Activated CD4-positive, alpha-beta memory T cell treated with anti-CD3 and anti-CD28 coated beads for 36 hours (primary cell): ENCODE measurements at regions of chr2 and their contacts with region 1.

Region 1: GRCh38 chr2:196926562-196927375 is at the start of gene PGAP1:
- DNase-seq: peak; percentile 93
- H3K4me3 Mint-ChIP-seq: peak within 1 kb of the TSS; percentile 96
- H3K27ac Mint-ChIP-seq: peak within 1 kb of the TSS; percentile 100
- H3K4me1 Mint-ChIP-seq: peaks cover 35% of the 10 kb centered on the region
- H3K27me3 Mint-ChIP-seq: peaks cover 4% of the 10 kb centered on the region
- total RNA-seq, gene PGAP1: 24.5 to 25.5 TPM

Region 2: DNA sequence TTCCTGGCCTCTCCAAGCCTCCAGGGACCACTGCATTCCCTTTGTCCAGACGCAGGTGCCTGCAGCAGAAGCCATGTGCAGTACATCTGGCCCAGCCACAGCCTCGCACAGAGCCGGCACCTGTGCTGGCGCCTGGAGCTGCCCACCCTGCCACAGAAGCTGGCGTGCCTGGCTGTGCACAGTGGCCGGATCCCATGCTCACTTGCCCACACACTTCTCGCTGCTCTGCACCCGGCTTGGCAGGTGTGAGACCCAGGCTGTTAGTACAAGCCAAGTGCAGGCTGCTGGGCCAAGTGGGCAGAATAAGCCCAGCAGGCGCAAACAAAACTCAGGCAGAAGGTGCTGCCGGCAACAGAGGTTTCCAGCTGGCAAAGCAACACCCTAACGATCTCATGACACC is 411.7 kb before region 1 on chr2:
- CTCF ChIA-PET with region 1: no interaction called
- POLR2A ChIA-PET with region 1: no interaction called
- intact Hi-C with region 1: no loop called
- DNase-seq: no peak
- H3K4me3 Mint-ChIP-seq: no peak overlapping the region
- H3K27ac Mint-ChIP-seq: no peak overlapping the region
- H3K4me1 Mint-ChIP-seq: no peaks in the 10 kb centered on the region
- H3K27me3 Mint-ChIP-seq: peaks cover 4% of the 10 kb centered on the region

Region 3: GRCh38 chr2:196914867-196915460 is 11.8 kb before region 1 on chr2:
- CTCF ChIA-PET with region 1: interaction called, 3 read pairs
- POLR2A ChIA-PET with region 1: interaction called, 14 read pairs
- intact Hi-C with region 1: loop called (anchors 1 kb)
- DNase-seq: no peak
- H3K4me3 Mint-ChIP-seq: peak overlapping the region; percentile 10
- H3K27ac Mint-ChIP-seq: peak overlapping the region; percentile 93
- H3K4me1 Mint-ChIP-seq: peaks cover 33% of the 10 kb centered on the region
- H3K27me3 Mint-ChIP-seq: no peaks in the 10 kb centered on the region

Region 4: GRCh38 chr2:196949116-196949515 is 22.3 kb after region 1 on chr2:
- CTCF ChIA-PET with region 1: no interaction called
- POLR2A ChIA-PET with region 1: no interaction called
- intact Hi-C with region 1: no loop called
- DNase-seq: no peak
- H3K4me3 Mint-ChIP-seq: no peak overlapping the region
- H3K27ac Mint-ChIP-seq: no peak overlapping the region
- H3K4me1 Mint-ChIP-seq: no peaks in the 10 kb centered on the region
- H3K27me3 Mint-ChIP-seq: peaks cover 5% of the 10 kb centered on the region

Region 5: GRCh38 chr2:196970099-196970498 is 43.3 kb after region 1 on chr2:
- CTCF ChIA-PET with region 1: no interaction called
- POLR2A ChIA-PET with region 1: interaction called, 8 read pairs
- intact Hi-C with region 1: loop called (anchors 1 kb)
- DNase-seq: no peak
- H3K4me3 Mint-ChIP-seq: no peak overlapping the region
- H3K27ac Mint-ChIP-seq: peak overlapping the region; percentile 13
- H3K4me1 Mint-ChIP-seq: peaks cover 11% of the 10 kb centered on the region
- H3K27me3 Mint-ChIP-seq: no peaks in the 10 kb centered on the region

Region 6: GRCh38 chr2:197042739-197043196 is 116.0 kb after region 1 on chr2:
- CTCF ChIA-PET with region 1: no interaction called
- POLR2A ChIA-PET with region 1: no interaction called
- intact Hi-C with region 1: loop called (anchors 2 kb)
- DNase-seq: peak; percentile 22
- H3K4me3 Mint-ChIP-seq: no peak overlapping the region
- H3K27ac Mint-ChIP-seq: peak overlapping the region; percentile 86
- H3K4me1 Mint-ChIP-seq: peaks cover 46% of the 10 kb centered on the region
- H3K27me3 Mint-ChIP-seq: no peaks in the 10 kb centered on the region

Region 7: DNA sequence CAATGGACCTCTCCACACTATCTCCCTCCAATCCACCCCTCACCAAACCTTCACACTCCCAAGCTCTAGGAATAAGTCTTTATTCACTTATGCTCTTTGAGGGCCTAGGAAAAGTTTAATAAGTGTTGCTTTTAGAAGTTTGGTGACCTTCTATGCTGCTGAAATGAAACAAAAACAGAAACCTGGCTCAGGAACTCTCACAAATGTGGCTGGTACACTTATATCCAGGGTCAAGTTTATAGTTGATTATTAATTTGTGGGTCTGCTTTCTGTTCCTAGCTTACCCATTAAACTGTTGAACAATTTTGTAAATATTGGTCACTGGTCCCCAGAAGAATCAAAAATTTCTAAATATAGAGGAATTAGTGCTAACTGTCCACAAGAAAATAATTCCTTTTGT is 398.0 kb after region 1 on chr2:
- CTCF ChIA-PET with region 1: no interaction called
- POLR2A ChIA-PET with region 1: interaction called, 3 read pairs
- intact Hi-C with region 1: loop called (anchors 2 kb)
- DNase-seq: no peak
- H3K4me3 Mint-ChIP-seq: no peak overlapping the region
- H3K27ac Mint-ChIP-seq: peak overlapping the region; percentile 78
- H3K4me1 Mint-ChIP-seq: peaks cover 74% of the 10 kb centered on the region
- H3K27me3 Mint-ChIP-seq: no peaks in the 10 kb centered on the region

Region 8: GRCh38 chr2:197453161-197453914 is 526.6 kb after region 1 on chr2 and contains the start of gene COQ10B:
- CTCF ChIA-PET with region 1: no interaction called
- POLR2A ChIA-PET with region 1: no interaction called
- intact Hi-C with region 1: loop called (anchors 5 kb)
- DNase-seq: peak; percentile 100
- H3K4me3 Mint-ChIP-seq: peak within 1 kb of the TSS; percentile 99
- H3K27ac Mint-ChIP-seq: peak within 1 kb of the TSS; percentile 100
- H3K4me1 Mint-ChIP-seq: peaks cover 39% of the 10 kb centered on the region
- H3K27me3 Mint-ChIP-seq: no peaks in the 10 kb centered on the region
- total RNA-seq, gene COQ10B: 21.5 TPM